Vagina (tissue), 2 donors: ENCODE measurements at regions of chr17 and their contacts with region 1.

Region 1: DNA sequence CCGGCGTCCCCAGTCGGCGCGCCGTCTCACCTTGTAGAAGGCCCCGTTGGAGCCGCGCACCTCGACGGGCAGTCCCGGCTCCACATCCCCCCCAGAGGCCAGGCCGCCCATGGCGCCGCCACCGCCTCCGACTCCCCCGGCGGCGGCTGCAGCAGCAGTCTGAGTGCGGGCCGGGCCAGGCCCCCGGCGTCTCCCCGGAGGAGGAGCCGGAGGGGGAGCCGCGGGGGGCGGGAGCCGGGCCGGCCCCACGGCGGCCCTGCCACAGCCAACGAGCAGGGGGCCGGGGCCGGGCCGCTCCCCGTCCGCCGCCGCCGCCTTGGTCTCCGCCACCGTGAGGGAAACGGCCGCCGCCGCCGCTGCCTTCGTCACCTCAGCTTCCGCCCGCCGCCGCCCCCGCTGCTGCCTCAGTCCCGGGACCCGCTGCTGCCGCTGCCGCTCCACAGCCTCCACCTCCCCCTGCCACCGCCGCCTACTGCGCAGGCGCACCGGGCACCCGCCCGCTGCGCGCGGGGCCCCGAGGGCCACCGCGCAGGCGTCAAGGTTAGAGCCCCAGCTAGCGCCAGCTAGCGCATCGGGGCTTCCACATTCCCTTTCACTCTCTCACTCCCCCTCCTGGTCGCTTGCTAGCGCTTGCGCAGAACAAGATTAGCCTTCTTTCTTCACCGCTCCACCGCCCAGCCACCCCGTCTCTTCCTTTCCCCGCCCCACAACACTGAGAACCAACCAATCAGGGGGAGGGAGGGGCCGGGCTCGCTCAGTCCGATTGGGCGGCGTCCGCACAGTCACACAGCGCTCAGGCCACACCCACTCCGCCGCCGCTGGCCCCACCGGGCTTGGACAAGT is at the start of gene FXR2:
- DNase-seq: peak; percentile 100
- H3K4me3 ChIP-seq: peak within 1 kb of the TSS; percentile 83 to 98
- H3K27ac ChIP-seq: peak within 1 kb of the TSS; percentile 86
- H3K4me1 ChIP-seq: peaks cover 50% of the 10 kb centered on the region
- H3K27me3 ChIP-seq: no peaks in the 10 kb centered on the region
- CTCF ChIP-seq: peak; percentile 24 to 63 (median 31)
- POLR2A ChIP-seq: peak in 1 of 2 donors; percentile 90
- total RNA-seq, gene FXR2: 36.1 TPM

Region 2: GRCh38 chr17:7687908-7688807 is 73.5 kb after region 1 on chr17 and contains the start of gene WRAP53:
- intact Hi-C with region 1: loop called (anchors 2 kb)
- DNase-seq: peak in 1 of 2 donors; percentile 99
- H3K4me3 ChIP-seq: peak within 1 kb of the TSS; percentile 73 to 83
- H3K27ac ChIP-seq: peak within 1 kb of the TSS; percentile 95
- H3K4me1 ChIP-seq: peaks cover 36% of the 10 kb centered on the region
- H3K27me3 ChIP-seq: no peaks in the 10 kb centered on the region
- CTCF ChIP-seq: peak; percentile 92 to 98 (median 92)
- POLR2A ChIP-seq: no peak
- total RNA-seq, gene WRAP53: 7.6 TPM